ENCODE measurements at regions of chr13 and their contacts with region 1.

Region 1: GRCh38 chr13:41061075-41061913 is at the start of gene WBP4:
- DNase-seq: peak; percentile 85
- H3K4me3 Mint-ChIP-seq: peak within 1 kb of the TSS; percentile 95
- H3K27ac Mint-ChIP-seq: peak within 1 kb of the TSS; percentile 100
- H3K4me1 Mint-ChIP-seq: peaks cover 43% of the 10 kb centered on the region
- H3K27me3 Mint-ChIP-seq: no peaks in the 10 kb centered on the region
- total RNA-seq, gene WBP4: 13.3 and 13.8 TPM in 2 replicates

Region 2: GRCh38 chr13:40863723-40864122 is 197.6 kb before region 1 on chr13:
- intact Hi-C with region 1: no loop called
- DNase-seq: no peak
- H3K4me3 Mint-ChIP-seq: no peak overlapping the region
- H3K27ac Mint-ChIP-seq: no peak overlapping the region
- H3K4me1 Mint-ChIP-seq: no peaks in the 10 kb centered on the region
- H3K27me3 Mint-ChIP-seq: no peaks in the 10 kb centered on the region

Region 3: GRCh38 chr13:40982772-40983171 is 78.5 kb before region 1 on chr13:
- intact Hi-C with region 1: loop called (anchors 2 kb)
- DNase-seq: peak; percentile 53
- H3K4me3 Mint-ChIP-seq: peak overlapping the region; percentile 70
- H3K27ac Mint-ChIP-seq: peak overlapping the region; percentile 93
- H3K4me1 Mint-ChIP-seq: peaks cover 68% of the 10 kb centered on the region
- H3K27me3 Mint-ChIP-seq: no peaks in the 10 kb centered on the region

Region 4: DNA sequence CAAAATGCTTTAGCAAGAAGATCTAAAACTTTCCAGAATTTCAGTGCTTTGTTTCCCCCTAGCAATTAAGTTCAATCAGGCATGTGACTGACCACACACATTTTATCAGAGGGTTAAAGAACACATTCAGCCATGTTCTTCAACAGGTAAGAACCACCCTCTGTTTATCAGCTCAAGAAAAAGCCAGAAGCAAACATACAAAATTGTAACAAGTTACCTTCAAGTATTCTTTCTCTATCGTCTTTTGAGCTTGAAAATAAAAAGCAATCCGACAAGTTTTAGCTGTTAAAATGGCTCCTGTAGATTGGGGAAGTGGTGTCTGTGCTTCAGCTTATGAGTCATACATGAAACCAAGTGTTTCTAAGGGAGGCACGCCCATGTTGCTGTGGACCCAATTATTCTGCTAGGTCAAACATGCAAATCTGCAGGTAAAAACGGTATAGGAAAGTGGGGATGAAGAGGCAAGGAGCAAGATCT is 42.2 kb before region 1 on chr13 and contains the start of gene ELF1:
- intact Hi-C with region 1: loop called (anchors 1 kb)
- DNase-seq: peak; percentile 51
- H3K4me3 Mint-ChIP-seq: peak within 1 kb of the TSS; percentile 91
- H3K27ac Mint-ChIP-seq: peak within 1 kb of the TSS; percentile 97
- H3K4me1 Mint-ChIP-seq: peaks cover 38% of the 10 kb centered on the region
- H3K27me3 Mint-ChIP-seq: no peaks in the 10 kb centered on the region
- total RNA-seq, gene ELF1: 65.3 and 68.1 TPM in 2 replicates

Region 5: GRCh38 chr13:41034881-41035280 is 26.4 kb before region 1 on chr13:
- intact Hi-C with region 1: no loop called
- DNase-seq: no peak
- H3K4me3 Mint-ChIP-seq: no peak overlapping the region
- H3K27ac Mint-ChIP-seq: no peak overlapping the region
- H3K4me1 Mint-ChIP-seq: peaks cover 21% of the 10 kb centered on the region
- H3K27me3 Mint-ChIP-seq: no peaks in the 10 kb centered on the region

Region 6: GRCh38 chr13:41193919-41194824 is 132.9 kb after region 1 on chr13 and contains the start of gene KBTBD7:
- intact Hi-C with region 1: loop called (anchors 1 kb)
- DNase-seq: peak; percentile 88
- H3K4me3 Mint-ChIP-seq: peak within 1 kb of the TSS; percentile 85
- H3K27ac Mint-ChIP-seq: peak within 1 kb of the TSS; percentile 91
- H3K4me1 Mint-ChIP-seq: peaks cover 40% of the 10 kb centered on the region
- H3K27me3 Mint-ChIP-seq: no peaks in the 10 kb centered on the region
- total RNA-seq, gene KBTBD7: 5.1 and 5.8 TPM in 2 replicates

Region 7: GRCh38 chr13:41465241-41465847 is 404.1 kb after region 1 on chr13:
- intact Hi-C with region 1: loop called (anchors 2 kb)
- DNase-seq: peak; percentile 88
- H3K4me3 Mint-ChIP-seq: peak overlapping the region; percentile 76
- H3K27ac Mint-ChIP-seq: peak overlapping the region; percentile 92
- H3K4me1 Mint-ChIP-seq: peaks cover 69% of the 10 kb centered on the region
- H3K27me3 Mint-ChIP-seq: no peaks in the 10 kb centered on the region

Region 8: DNA sequence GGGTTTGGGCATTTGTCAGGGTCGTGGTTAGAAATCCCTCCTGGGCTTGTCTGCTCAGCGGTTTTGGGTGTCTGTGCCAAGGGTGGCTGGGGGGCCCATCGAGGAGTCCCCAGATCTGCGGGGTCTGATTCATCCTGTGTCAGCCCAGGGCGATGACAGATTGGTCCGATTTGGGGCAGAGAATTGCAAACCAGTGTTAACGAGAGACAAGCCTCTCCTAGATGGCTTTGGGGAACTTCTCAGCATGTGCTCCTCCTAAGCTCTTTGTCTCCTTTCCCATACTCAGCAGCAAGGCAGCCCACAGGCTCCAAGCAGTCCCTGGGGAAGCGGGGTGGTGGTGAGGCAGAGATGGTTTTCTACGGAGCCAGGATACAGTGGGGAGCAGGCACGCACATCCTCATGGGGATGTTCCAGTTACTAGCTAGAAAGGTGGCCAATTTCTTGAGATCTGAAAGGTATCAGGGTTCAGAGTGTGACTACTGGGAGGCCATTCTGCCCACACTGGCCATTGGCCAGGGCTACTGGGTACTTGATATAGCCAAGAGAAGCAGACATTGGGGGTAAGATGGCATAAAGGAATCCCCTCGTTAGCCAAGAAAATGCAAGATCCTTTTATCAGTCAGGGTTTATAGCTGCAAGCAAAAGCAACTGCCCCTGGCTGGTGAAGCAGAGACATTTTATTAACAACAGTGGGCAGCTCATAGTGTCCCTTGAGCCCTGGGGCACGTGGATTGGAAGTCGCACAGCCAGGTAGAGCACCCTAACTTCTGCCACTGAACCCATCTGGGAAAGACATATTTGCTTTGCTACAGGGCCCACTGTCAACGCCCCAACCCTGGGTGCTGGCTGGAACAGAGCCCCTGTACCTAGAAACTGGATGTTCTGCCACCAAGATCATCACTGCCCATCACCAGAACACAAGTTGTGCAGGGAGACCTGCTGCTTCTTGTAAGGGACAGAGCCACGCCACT is 459.7 kb after region 1 on chr13:
- intact Hi-C with region 1: no loop called
- DNase-seq: no peak
- H3K4me3 Mint-ChIP-seq: no peak overlapping the region
- H3K27ac Mint-ChIP-seq: no peak overlapping the region
- H3K4me1 Mint-ChIP-seq: no peaks in the 10 kb centered on the region
- H3K27me3 Mint-ChIP-seq: no peaks in the 10 kb centered on the region